Transverse colon (tissue), 4 donors: ENCODE measurements at regions of chr17 and their contacts with region 1.

Region 1: DNA sequence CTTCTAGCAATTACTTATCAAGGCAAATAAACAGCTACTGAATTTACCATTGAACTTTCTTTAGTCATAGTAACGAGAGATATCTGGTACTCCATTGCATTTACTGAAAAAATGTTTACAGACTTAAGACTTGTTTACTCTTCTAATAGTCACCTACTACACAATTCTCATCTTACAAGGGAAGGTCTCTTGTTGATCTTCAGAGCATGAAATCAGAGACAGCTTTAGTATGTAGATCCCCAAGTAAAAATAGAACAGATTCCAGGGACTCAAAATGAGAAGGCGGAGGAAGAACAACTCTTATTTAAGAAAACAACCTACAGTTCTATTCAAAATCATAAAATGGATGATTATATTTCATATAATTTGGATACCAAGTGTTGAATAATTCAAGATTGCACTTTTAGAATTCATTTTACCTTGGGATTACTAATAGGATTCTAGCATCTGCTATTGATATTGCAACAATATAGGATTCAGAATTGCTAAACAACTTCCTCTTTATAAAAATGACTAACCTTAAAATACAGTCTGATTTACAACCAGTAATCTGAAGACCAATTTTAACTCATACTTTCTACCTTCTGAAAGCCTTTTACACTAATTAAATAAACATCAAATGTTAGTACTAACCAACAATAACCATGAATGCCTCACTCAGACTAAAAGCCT is 20.8 kb downstream of the UBE2G1 start:
- DNase-seq: no peak
- H3K4me3 ChIP-seq: no peak overlapping the region
- H3K27ac ChIP-seq: no peak overlapping the region
- H3K4me1 ChIP-seq: peaks cover 0 to 48% (median 11%) of the 10 kb centered on the region in 4 donors
- H3K27me3 ChIP-seq: no peaks in the 10 kb centered on the region
- CTCF ChIP-seq: no peak
- EP300 ChIP-seq: no peak
- POLR2A ChIP-seq: no peak

Region 2: GRCh38 chr17:4130715-4131114 is 215.0 kb before region 1 on chr17:
- in situ Hi-C with region 1: no loop called
- intact Hi-C with region 1: no loop called
- DNase-seq: peak; percentile 53
- H3K4me3 ChIP-seq: no peak overlapping the region
- H3K27ac ChIP-seq: peak overlapping the region; percentile 49 to 77 (median 68)
- H3K4me1 ChIP-seq: peaks cover 14 to 69% (median 37%) of the 10 kb centered on the region in 4 donors
- H3K27me3 ChIP-seq: no peaks in the 10 kb centered on the region
- CTCF ChIP-seq: no peak
- EP300 ChIP-seq: no peak
- POLR2A ChIP-seq: no peak

Region 3: DNA sequence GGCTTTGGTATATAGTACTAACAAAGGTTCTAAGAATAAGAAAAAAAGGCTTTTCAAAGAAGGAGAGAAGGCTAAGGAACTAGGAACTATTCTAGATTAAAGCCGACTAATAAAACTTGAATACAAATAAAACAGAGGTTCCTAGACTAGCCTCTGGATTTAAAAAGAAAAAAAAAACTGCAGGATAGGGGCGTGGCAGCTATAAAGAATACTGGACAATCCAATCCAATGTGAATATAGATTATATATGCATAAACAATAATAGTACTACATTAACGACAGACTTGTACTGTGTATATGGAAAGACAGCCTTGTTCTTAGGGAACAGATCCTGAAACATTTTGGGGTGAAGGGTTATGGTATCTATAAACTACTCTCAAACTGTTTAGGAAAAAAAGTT is 58.0 kb before region 1 on chr17:
- in situ Hi-C with region 1: no loop called
- intact Hi-C with region 1: loop called (anchors 2 kb)
- DNase-seq: no peak
- H3K4me3 ChIP-seq: no peak overlapping the region
- H3K27ac ChIP-seq: peak overlapping the region; percentile 20 to 56 (median 41)
- H3K4me1 ChIP-seq: peaks cover 0 to 11% (median 2%) of the 10 kb centered on the region in 4 donors
- H3K27me3 ChIP-seq: no peaks in the 10 kb centered on the region
- CTCF ChIP-seq: no peak
- EP300 ChIP-seq: no peak
- POLR2A ChIP-seq: no peak